Activated CD8-positive, alpha-beta T cell treated with anti-CD3 and anti-CD28 coated beads, Interleukin-2, amount 10 ng/mL, durations not matched to agents 7 days and 5 days (primary cell): ENCODE measurements at regions of chr9 and their contacts with region 1.

Region 1: GRCh38 chr9:34332076-34332964 is 3.0 kb downstream of the NUDT2 start:
- DNase-seq: peak; percentile 26
- ATAC-seq: no peak
- H3K4me3 Mint-ChIP-seq: no peak overlapping the region
- H3K27ac Mint-ChIP-seq: no peak overlapping the region
- H3K4me1 Mint-ChIP-seq: peaks cover 20% of the 10 kb centered on the region
- H3K27me3 Mint-ChIP-seq: no peaks in the 10 kb centered on the region

Region 2: GRCh38 chr9:34376596-34377403 is 44.5 kb after region 1 on chr9 and contains the start of gene MYORG:
- CTCF ChIA-PET with region 1: interaction called, 193 read pairs
- POLR2A ChIA-PET with region 1: interaction called, 11 read pairs
- DNase-seq: peak; percentile 99
- ATAC-seq: peak; percentile 83
- H3K4me3 Mint-ChIP-seq: peak within 1 kb of the TSS; percentile 97
- H3K27ac Mint-ChIP-seq: peak within 1 kb of the TSS; percentile 90
- H3K4me1 Mint-ChIP-seq: peaks cover 54% of the 10 kb centered on the region
- H3K27me3 Mint-ChIP-seq: peaks cover 11% of the 10 kb centered on the region
- total RNA-seq, gene MYORG: 8.8 to 9.1 TPM